ENCODE measurements at regions of chrX and their contacts with region 1.

Region 1: DNA sequence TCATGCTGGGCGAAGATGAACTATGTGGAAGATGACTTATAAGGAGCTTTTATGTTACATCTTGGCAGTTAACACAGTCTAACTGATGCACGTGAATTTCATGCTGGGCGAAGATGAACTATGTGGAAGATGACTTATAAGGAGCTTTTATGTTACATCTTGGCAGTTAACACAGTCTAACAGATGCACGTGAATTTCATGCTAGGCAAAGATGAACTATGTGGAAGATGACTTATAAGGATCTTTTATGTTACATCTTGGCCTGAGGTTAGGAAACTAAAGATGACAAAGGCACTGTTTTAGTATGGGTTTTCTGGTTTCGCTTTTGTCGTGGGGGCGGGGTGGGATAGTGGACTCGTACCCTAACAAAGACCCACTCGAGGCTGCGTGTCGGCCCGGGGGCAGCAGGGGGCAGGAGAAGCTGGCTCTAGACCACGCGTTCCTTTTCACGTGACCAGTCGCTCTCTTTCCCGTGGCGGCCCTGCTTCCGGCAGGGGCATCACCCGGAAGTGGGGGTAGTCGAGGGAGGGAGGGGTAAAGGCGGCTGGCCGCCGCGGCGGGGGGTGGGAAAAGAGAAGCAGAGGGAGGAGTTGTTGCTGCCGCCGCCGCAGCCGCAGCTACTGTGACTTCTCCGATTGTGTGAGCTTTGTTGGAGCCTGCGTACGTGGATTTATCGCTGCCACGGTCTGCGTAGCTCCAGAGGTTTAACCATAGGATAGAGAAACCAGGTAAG is at the start of gene ATP7A:
- DNase-seq: peak; percentile 60 to 71
- H3K4me3 ChIP-seq: peak within 1 kb of the TSS; percentile 53 to 68 (median 58); a peak in 7 of 8 replicates
- H3K27ac ChIP-seq: no peak within 1 kb of the TSS
- H3K4me1 ChIP-seq: no peaks in the 10 kb centered on the region
- H3K27me3 ChIP-seq: no peaks in the 10 kb centered on the region
- CTCF ChIP-seq: peak; percentile 36 to 55 (median 53)
- EP300 ChIP-seq: no peak
- POLR2A ChIP-seq: peak in 1 of 2 experiments; percentile 34; a peak in 2 of 3 replicates
- RAD21 ChIP-seq: peak; percentile 41 to 61; a peak in 3 of 4 replicates
- total RNA-seq, gene ATP7A: 2.4 and 2.8 TPM in 2 replicates

Region 2: GRCh38 chrX:77899081-77899828 is 11.0 kb before region 1 on chrX and contains the start of gene COX7B:
- CTCF ChIA-PET with region 1: interaction called, 5 read pairs
- POLR2A ChIA-PET with region 1: interaction called, 32 read pairs
- DNase-seq: peak; percentile 43 to 51
- H3K4me3 ChIP-seq: peak within 1 kb of the TSS; percentile 82 to 100 (median 88)
- H3K27ac ChIP-seq: peak within 1 kb of the TSS; percentile 82
- H3K4me1 ChIP-seq: peaks cover 0 to 2% (median 0%) of the 10 kb centered on the region in 4 experiments; a peak in 2 of 7 replicates
- H3K27me3 ChIP-seq: no peaks in the 10 kb centered on the region
- CTCF ChIP-seq: peak in 2 of 3 experiments; percentile 24 to 46; a peak in 1 of 4 replicates
- EP300 ChIP-seq: no peak
- POLR2A ChIP-seq: peak; percentile 68 to 91
- RAD21 ChIP-seq: peak; percentile 12 to 30; a peak in 2 of 4 replicates
- total RNA-seq, gene COX7B: 268 and 276 TPM in 2 replicates